ENCODE measurements at regions of chr13 and their contacts with region 1.

Region 1: GRCh38 chr13:27339299-27339698 is 68.7 kb downstream of the RASL11A start:
- DNase-seq: peak; percentile 61
- H3K4me3 Mint-ChIP-seq: no peak overlapping the region
- H3K27ac Mint-ChIP-seq: no peak overlapping the region
- H3K4me1 Mint-ChIP-seq: no peaks in the 10 kb centered on the region
- H3K27me3 Mint-ChIP-seq: peaks cover 15% of the 10 kb centered on the region

Region 2: DNA sequence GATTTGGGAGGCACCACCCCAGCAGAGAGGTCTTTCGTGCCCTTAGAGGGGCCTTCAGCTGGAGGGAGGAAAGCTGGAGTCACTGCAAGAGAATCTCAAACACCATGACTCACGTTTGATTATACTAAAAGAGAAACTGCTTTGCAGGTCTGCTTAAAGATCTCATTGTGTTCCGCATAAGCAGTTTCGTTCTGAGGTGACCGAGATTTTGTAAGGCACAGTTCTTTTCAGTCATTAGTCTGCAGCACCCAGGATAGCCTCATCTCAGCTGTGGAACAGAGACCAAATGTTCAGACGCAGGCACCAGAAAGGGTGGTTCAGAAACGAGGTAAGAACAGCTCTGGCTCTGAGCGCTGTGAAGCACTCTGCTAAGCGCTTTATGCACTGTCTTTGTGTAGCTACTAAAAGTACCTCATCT is 13.9 kb after region 1 on chr13:
- CTCF ChIA-PET with region 1: interaction called, 13 read pairs
- DNase-seq: no peak
- H3K4me3 Mint-ChIP-seq: no peak overlapping the region
- H3K27ac Mint-ChIP-seq: no peak overlapping the region
- H3K4me1 Mint-ChIP-seq: peaks cover 7% of the 10 kb centered on the region
- H3K27me3 Mint-ChIP-seq: peaks cover 22% of the 10 kb centered on the region

Measured in activated naive CD4-positive, alpha-beta T cell treated with anti-CD3 and anti-CD28 coated beads, Interleukin-2, amount 10 ng/mL, durations not matched to agents 7 days and 5 days (primary cell).